ENCODE measurements at regions of chr6 and their contacts with region 1.

Region 1: GRCh38 chr6:41027799-41028628 is 11.0 kb downstream of the UNC5CL start:
- DNase-seq: peak; percentile 18
- H3K4me3 ChIP-seq: peak overlapping the region; percentile 60
- H3K27ac ChIP-seq: no peak overlapping the region
- H3K27me3 ChIP-seq: peaks cover 4% of the 10 kb centered on the region
- CTCF ChIP-seq: peak; percentile 89

Region 2: GRCh38 chr6:40395066-40395704 is 632.8 kb before region 1 on chr6:
- CTCF ChIA-PET with region 1: no interaction called
- POLR2A ChIA-PET with region 1: no interaction called
- DNase-seq: no peak
- H3K4me3 ChIP-seq: no peak overlapping the region
- H3K27ac ChIP-seq: no peak overlapping the region
- H3K27me3 ChIP-seq: no peaks in the 10 kb centered on the region
- CTCF ChIP-seq: no peak

Region 3: DNA sequence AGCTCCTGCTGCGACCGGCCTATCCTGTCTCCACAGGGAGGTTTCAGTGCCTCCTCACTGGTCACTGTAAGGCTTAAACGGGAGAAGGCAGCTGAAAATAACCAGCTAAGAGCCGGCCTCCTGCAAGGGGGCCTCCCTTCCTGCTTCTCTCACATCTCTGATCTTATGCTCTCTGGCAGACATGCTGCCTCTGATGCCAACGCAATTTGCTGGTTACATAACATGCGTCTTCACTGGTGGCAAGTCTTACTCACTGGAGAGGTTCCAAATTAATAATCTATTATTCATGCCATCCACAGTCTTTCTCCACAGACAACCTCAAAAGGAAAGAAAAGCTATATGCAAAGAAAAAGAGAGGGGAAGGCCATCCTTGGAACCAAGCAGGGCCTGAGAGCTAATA is 349.1 kb before region 1 on chr6:
- CTCF ChIA-PET with region 1: no interaction called
- POLR2A ChIA-PET with region 1: no interaction called
- DNase-seq: no peak
- H3K4me3 ChIP-seq: no peak overlapping the region
- H3K27ac ChIP-seq: no peak overlapping the region
- H3K27me3 ChIP-seq: no peaks in the 10 kb centered on the region
- CTCF ChIP-seq: no peak

Region 4: GRCh38 chr6:40894962-40895799 is 132.8 kb before region 1 on chr6:
- CTCF ChIA-PET with region 1: interaction called, 183 read pairs
- POLR2A ChIA-PET with region 1: no interaction called
- DNase-seq: peak; percentile 18
- H3K4me3 ChIP-seq: no peak overlapping the region
- H3K27ac ChIP-seq: no peak overlapping the region
- H3K27me3 ChIP-seq: peaks cover 21% of the 10 kb centered on the region
- CTCF ChIP-seq: peak; percentile 81

Region 5: DNA sequence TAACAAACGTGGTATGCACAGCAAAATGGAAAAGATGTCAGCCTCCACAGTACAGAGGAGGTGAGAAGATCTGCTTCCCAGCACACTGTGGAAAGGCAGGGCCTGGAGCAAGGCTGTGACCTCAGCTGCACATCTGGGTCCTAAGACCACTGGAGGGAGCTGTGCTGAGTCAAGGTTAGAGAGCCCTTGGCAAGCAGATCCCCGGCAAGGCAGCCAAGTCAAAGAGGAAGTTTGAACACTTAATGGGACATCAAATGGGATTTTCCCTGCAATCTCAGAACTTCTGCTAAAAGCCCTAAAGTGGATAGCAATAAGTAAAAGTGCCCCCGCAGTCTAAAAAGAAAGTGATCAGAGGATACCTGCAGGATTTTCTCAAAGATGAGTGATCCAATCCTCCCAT is 28.4 kb before region 1 on chr6:
- CTCF ChIA-PET with region 1: interaction called, 14 read pairs
- POLR2A ChIA-PET with region 1: no interaction called
- DNase-seq: no peak
- H3K4me3 ChIP-seq: no peak overlapping the region
- H3K27ac ChIP-seq: no peak overlapping the region
- H3K27me3 ChIP-seq: peaks cover 14% of the 10 kb centered on the region
- CTCF ChIP-seq: peak; percentile 54

Region 6: DNA sequence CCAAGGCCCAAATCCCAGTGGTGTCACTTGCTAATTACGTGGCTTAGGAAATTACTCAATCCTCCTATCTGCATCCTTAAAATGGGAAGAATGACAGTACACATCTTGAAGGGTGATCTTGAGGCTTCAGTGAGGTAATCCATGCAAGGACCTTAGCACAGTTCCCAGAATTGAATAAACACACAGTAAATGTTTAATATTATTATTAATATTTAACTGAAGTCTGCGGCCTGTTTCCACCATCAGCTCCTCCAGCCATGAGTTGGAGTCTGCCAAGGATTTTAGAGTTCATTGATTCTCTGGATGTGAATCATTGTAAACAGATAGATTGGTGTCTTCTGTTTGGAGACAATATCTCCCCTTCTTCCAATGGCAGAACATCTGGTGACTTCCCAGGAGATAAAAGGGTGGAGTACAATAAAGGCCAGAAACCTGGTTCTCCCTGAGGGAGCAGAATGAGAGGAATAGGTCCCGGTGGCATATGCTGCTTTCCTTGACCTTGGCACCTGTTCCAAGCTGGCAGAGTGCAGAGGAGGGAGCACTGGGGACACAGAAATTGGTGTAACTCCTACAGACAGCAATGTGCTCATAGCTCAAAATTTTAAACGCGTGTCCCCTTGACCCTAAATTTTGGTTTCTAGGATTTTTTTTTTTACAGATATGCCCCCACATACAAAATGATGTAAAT is 14.4 kb before region 1 on chr6:
- CTCF ChIA-PET with region 1: interaction called, 29 read pairs
- POLR2A ChIA-PET with region 1: no interaction called
- DNase-seq: no peak
- H3K4me3 ChIP-seq: no peak overlapping the region
- H3K27ac ChIP-seq: no peak overlapping the region
- H3K27me3 ChIP-seq: peaks cover 11% of the 10 kb centered on the region
- CTCF ChIP-seq: no peak

Region 7: DNA sequence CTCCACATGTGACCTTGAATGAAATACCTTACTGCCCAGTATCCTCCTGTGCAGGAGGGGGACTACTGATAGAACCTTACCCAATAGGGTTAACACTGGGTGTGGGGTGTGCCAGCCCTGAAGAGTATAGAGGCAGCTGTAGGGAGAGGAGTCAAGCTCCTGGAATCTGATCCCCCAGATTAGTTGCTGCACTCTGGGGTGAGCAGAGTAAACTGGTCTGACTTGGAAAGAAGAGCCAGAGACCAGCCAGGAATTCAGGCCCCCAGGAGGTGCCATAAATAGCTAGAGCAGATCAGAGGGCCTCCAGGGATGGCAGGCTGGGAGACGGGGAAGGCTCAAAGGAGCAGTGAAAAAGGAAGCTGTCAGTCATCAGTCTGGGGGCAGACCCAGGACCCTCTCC is 21.5 kb after region 1 on chr6:
- CTCF ChIA-PET with region 1: interaction called, 26 read pairs
- POLR2A ChIA-PET with region 1: no interaction called
- DNase-seq: no peak
- H3K4me3 ChIP-seq: no peak overlapping the region
- H3K27ac ChIP-seq: no peak overlapping the region
- H3K27me3 ChIP-seq: peaks cover 9% of the 10 kb centered on the region
- CTCF ChIP-seq: no peak

Region 8: GRCh38 chr6:41072676-41073623 is 44.9 kb after region 1 on chr6 and contains the start of gene NFYA:
- CTCF ChIA-PET with region 1: interaction called, 27 read pairs
- POLR2A ChIA-PET with region 1: no interaction called
- DNase-seq: peak; percentile 99
- H3K4me3 ChIP-seq: peak within 1 kb of the TSS; percentile 85
- H3K27ac ChIP-seq: peak within 1 kb of the TSS; percentile 99
- H3K27me3 ChIP-seq: no peaks in the 10 kb centered on the region
- CTCF ChIP-seq: peak; percentile 30
- polyA plus RNA-seq, gene NFYA: 10.1 and 13.4 TPM in 2 replicates